ENCODE measurements at regions of chr2 and their contacts with region 1.

Region 1: DNA sequence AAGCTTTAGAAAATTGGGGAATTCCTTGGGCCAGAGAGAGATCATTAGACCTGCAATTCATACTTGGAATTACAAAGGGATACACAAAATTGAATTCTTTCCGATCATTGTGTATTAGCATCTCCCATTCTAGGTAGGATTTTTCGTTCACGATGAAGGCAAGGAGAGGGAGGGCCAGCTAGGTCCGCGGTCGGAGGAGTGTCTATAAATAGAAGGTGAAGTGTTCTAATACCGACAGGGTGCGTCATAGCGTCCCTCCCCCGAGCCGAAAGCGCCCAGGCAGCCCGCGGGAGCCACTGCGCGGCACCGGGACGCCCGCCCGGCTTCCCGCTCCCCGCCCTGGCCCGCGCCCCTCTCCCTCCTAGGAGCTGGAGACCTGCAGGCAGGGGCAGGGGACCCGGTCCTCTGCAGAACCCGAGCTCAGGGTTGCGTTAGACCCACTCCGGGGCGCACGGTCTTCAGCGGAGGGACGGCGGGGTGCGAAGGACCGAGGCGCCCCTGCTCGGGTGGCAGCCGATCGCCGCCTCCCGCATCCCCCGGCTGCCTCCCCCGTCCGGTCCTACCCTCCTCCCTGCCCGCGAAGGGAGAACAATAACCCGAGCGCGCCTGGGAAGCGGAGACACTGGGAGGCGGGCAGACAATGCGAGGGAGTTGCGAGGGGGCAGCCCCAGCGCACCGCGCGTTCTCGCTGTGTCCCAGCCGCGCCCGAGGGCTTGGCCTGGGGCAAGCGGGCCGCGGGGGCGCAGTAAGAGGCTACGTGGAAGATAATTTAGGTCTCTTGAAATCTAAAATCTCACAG is 114.2 kb upstream of the SERTAD2 start:
- DNase-seq: peak; percentile 85
- H3K4me3 Mint-ChIP-seq: peak overlapping the region; percentile 80
- H3K27ac Mint-ChIP-seq: peak overlapping the region; percentile 76
- H3K4me1 Mint-ChIP-seq: peaks cover 26% of the 10 kb centered on the region
- H3K27me3 Mint-ChIP-seq: no peaks in the 10 kb centered on the region

Region 2: DNA sequence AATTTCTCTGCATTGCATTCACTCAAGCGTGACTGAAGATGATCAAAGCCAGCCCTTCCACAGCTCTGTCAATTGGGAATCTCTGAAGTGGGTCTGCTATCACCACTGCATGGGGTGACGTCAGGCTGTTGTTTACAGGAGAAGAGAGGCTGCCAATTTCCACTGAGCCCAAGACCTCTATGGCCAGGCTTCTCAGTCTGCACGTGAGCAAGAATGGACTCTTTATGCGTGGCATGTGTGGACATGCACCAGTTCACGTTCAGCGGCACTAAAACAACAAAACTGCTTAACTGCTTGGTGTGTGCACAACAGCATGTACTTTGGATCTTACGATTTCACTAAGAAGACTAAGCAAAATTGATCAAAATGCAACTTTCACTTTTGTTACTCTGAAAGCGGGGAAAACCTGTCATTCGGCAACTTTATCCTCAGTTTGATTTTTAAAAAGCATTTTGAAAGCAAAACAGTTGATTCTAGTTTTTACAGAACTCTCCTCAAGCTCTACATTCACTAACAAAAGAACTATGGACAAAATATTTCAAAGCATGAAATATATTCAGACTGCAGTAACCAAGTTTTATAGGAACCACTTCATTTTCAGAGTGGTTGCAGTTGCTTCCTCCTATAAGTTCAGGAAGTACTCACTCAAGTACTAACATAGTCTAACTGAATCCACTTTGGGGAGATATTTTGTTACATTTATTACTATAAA is 37.2 kb before region 1 on chr2:
- CTCF ChIA-PET with region 1: interaction called, 4 read pairs
- intact Hi-C with region 1: loop called (anchors 1 kb)
- DNase-seq: peak; percentile 49
- H3K4me3 Mint-ChIP-seq: peak overlapping the region; percentile 78
- H3K27ac Mint-ChIP-seq: peak overlapping the region; percentile 90
- H3K4me1 Mint-ChIP-seq: peaks cover 63% of the 10 kb centered on the region
- H3K27me3 Mint-ChIP-seq: no peaks in the 10 kb centered on the region

Region 3: GRCh38 chr2:64819774-64820696 is 52.2 kb after region 1 on chr2:
- CTCF ChIA-PET with region 1: interaction called, 3 read pairs
- intact Hi-C with region 1: loop called (anchors 1 kb)
- DNase-seq: peak; percentile 72
- H3K4me3 Mint-ChIP-seq: peak overlapping the region; percentile 39
- H3K27ac Mint-ChIP-seq: peak overlapping the region; percentile 85
- H3K4me1 Mint-ChIP-seq: peaks cover 19% of the 10 kb centered on the region
- H3K27me3 Mint-ChIP-seq: no peaks in the 10 kb centered on the region

Region 4: GRCh38 chr2:66156171-66156570 is 1388.3 kb after region 1 on chr2:
- CTCF ChIA-PET with region 1: no interaction called
- intact Hi-C with region 1: no loop called
- DNase-seq: no peak
- H3K4me3 Mint-ChIP-seq: no peak overlapping the region
- H3K27ac Mint-ChIP-seq: no peak overlapping the region
- H3K4me1 Mint-ChIP-seq: no peaks in the 10 kb centered on the region
- H3K27me3 Mint-ChIP-seq: no peaks in the 10 kb centered on the region